HCT116 (cell line): ENCODE measurements at regions of chr5 and their contacts with region 1.

Region 1: GRCh38 chr5:170791325-170791954 is 7.9 kb downstream of the GABRP start:
- DNase-seq: peak; percentile 49
- ATAC-seq: peak; percentile 93
- H3K4me3 ChIP-seq: no peak overlapping the region
- H3K27ac ChIP-seq: no peak overlapping the region
- H3K4me1 ChIP-seq: no peaks in the 10 kb centered on the region
- H3K27me3 ChIP-seq: 0 out of 2 replicates have a peak, but pooled peaks cover 4% of the 10 kb centered on the region
- CTCF ChIP-seq: peak; percentile 69 to 80 (median 75)
- POLR2A ChIP-seq: no peak
- RAD21 ChIP-seq: peak; percentile 83

Region 2: GRCh38 chr5:170434966-170435605 is 356.4 kb before region 1 on chr5:
- CTCF ChIA-PET with region 1: interaction called, 3 read pairs
- POLR2A ChIA-PET with region 1: no interaction called
- RAD21 ChIA-PET with region 1: no interaction called
- intact Hi-C with region 1: loop called (anchors 5 kb)
- DNase-seq: peak; percentile 32
- ATAC-seq: peak; percentile 91
- H3K4me3 ChIP-seq: no peak overlapping the region
- H3K27ac ChIP-seq: no peak overlapping the region
- H3K4me1 ChIP-seq: no peaks in the 10 kb centered on the region
- H3K27me3 ChIP-seq: peaks cover 14% of the 10 kb centered on the region
- CTCF ChIP-seq: peak; percentile 87 to 97 (median 95)
- POLR2A ChIP-seq: no peak
- RAD21 ChIP-seq: peak; percentile 92

Region 3: DNA sequence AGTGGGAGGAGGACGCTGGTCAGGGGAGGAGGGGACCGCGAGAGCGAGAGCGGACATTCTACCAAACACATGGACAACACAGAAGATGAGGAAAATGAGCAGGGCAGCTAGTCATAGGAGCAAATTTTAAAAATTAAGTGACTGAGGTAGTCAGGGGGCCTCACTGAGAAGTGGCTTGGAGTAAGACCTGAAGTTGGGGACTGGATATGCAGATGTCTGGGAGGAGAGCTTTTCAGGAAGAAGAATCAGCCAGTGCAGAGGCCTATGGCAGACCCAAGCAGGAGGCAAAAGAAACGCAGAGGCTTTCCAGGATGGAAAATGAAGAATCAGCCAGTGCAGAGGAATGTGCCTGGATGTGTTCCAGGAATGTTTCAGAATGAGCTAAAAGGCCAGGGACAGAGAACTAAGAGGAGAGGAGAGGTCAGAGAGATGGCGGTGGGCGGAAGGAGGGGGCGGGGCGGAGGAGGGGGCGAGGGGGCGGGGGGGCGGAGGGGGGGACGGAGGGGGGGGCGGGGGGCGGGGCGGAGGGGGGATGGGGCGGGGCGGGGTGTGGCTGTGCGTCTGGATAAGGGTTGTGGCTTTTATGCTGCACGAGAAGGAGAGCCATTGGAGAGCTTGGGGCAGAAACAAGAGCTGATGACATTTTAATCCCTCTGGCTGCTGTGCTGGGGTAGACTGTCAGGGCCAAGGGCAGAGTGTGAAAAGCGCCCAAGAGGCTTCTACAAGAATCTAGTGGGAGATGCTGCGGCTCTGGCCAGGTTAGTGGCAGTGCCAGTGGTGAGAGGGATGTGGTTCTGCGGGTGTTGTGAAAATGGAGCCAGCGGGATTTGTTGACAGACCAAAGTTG is 158.0 kb before region 1 on chr5:
- CTCF ChIA-PET with region 1: interaction called, 56 read pairs
- POLR2A ChIA-PET with region 1: no interaction called
- RAD21 ChIA-PET with region 1: interaction called, 4 to 5 read pairs
- intact Hi-C with region 1: loop called (anchors 1 kb)
- DNase-seq: peak; percentile 50
- ATAC-seq: peak; percentile 84
- H3K4me3 ChIP-seq: peak overlapping the region; percentile 44 to 54
- H3K27ac ChIP-seq: peak overlapping the region; percentile 64
- H3K4me1 ChIP-seq: peaks cover 11 to 27% of the 10 kb centered on the region in 2 experiments
- H3K27me3 ChIP-seq: no peaks in the 10 kb centered on the region
- CTCF ChIP-seq: no peak
- POLR2A ChIP-seq: peak; percentile 34
- RAD21 ChIP-seq: no peak

Region 4: GRCh38 chr5:170638454-170639220 is 152.8 kb before region 1 on chr5:
- CTCF ChIA-PET with region 1: interaction called, 56 read pairs
- POLR2A ChIA-PET with region 1: no interaction called
- RAD21 ChIA-PET with region 1: interaction called, 4 to 5 read pairs
- intact Hi-C with region 1: loop called (anchors 1 kb)
- DNase-seq: peak; percentile 35
- ATAC-seq: peak; percentile 98
- H3K4me3 ChIP-seq: no peak overlapping the region
- H3K27ac ChIP-seq: no peak overlapping the region
- H3K4me1 ChIP-seq: peaks cover 11 to 14% of the 10 kb centered on the region in 2 experiments
- H3K27me3 ChIP-seq: no peaks in the 10 kb centered on the region
- CTCF ChIP-seq: peak; percentile 78 to 85 (median 82)
- POLR2A ChIP-seq: no peak
- RAD21 ChIP-seq: peak; percentile 91

Region 5: DNA sequence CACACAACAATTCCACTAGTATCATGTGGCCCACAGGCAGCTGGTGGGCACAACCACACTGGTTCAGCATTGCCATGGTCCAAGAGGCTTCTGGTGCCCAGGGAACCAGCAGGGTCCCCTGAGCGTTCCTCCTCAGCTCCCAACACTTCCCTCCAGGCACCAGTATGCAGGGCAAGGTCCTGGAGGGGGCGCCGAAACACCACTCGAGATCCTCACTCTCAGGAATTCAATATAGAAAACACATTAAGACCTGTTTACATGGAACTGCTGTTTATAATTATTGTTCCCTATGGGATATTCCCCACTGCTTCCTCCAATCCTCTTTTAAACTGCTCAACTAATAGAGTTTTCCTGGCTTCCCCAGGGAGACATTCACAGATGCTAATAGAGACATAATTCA is 99.8 kb before region 1 on chr5:
- CTCF ChIA-PET with region 1: interaction called, 10 read pairs
- POLR2A ChIA-PET with region 1: no interaction called
- RAD21 ChIA-PET with region 1: no interaction called
- intact Hi-C with region 1: no loop called
- DNase-seq: no peak
- ATAC-seq: peak; percentile 74
- H3K4me3 ChIP-seq: no peak overlapping the region
- H3K27ac ChIP-seq: no peak overlapping the region
- H3K4me1 ChIP-seq: no peaks in the 10 kb centered on the region
- H3K27me3 ChIP-seq: peaks cover 90% of the 10 kb centered on the region
- CTCF ChIP-seq: peak; percentile 23 to 48 (median 31); a peak in 5 of 6 replicates
- POLR2A ChIP-seq: no peak
- RAD21 ChIP-seq: peak; percentile 53

Region 6: DNA sequence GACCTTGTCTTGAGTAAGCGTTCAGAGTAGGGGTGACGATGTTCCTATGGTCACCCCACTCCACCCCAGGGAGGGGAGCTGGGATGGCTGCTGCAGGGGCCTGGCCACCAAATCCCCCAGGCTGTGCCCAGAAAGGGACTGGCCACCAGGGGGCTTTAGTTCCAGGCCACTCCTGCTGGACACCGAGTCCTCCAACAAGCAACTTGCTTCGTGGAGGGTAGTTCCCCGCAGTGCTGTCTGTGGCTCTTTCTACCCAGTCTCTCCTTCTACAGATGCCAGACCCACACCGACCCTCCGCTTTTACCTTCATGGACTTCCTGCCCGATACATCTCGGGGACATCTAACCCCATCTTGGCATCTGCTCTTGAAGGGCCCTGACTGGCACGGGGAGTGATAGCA is 43.6 kb before region 1 on chr5:
- CTCF ChIA-PET with region 1: interaction called, 113 read pairs
- POLR2A ChIA-PET with region 1: no interaction called
- RAD21 ChIA-PET with region 1: interaction called, 4 to 13 read pairs
- intact Hi-C with region 1: loop called (anchors 1 kb)
- DNase-seq: peak; percentile 16
- ATAC-seq: peak; percentile 35; the same call in 1 of the 2 replicates
- H3K4me3 ChIP-seq: no peak overlapping the region
- H3K27ac ChIP-seq: no peak overlapping the region
- H3K4me1 ChIP-seq: peaks cover 0 to 10% of the 10 kb centered on the region in 2 experiments; a peak in 1 of 4 replicates
- H3K27me3 ChIP-seq: peaks cover 13% of the 10 kb centered on the region; the same call in 1 of the 2 replicates
- CTCF ChIP-seq: peak; percentile 40 to 68 (median 56); a peak in 5 of 6 replicates
- POLR2A ChIP-seq: no peak
- RAD21 ChIP-seq: peak; percentile 37; the same call in 1 of the 2 replicates

Region 7: DNA sequence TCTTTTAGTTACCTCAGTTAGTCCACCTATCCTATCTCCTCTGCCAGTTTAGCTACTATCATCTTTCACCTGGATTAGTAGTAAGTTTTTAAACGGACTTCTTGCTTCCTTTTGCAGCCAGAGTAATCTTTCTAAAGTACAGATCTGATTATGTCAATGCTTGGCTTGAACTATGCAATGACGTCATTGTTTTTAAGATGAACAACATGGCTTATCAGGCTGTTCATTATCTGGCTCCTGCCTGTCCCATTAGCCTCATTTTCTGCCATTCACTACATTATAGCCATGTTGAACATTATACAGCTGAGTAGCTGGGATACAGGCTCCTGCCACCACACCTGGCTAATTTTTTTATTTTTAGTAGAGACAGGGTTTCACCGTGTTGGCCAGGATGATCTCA is 169.1 kb after region 1 on chr5:
- CTCF ChIA-PET with region 1: no interaction called
- POLR2A ChIA-PET with region 1: no interaction called
- RAD21 ChIA-PET with region 1: no interaction called
- intact Hi-C with region 1: no loop called
- DNase-seq: no peak
- ATAC-seq: no peak
- H3K4me3 ChIP-seq: no peak overlapping the region
- H3K27ac ChIP-seq: no peak overlapping the region
- H3K4me1 ChIP-seq: no peaks in the 10 kb centered on the region
- H3K27me3 ChIP-seq: no peaks in the 10 kb centered on the region
- CTCF ChIP-seq: no peak
- POLR2A ChIP-seq: no peak
- RAD21 ChIP-seq: no peak